A673 (cell line): ENCODE measurements at regions of chr3 and their contacts with region 1.

Region 1: GRCh38 chr3:153927107-153927506 is 194.1 kb upstream of the ARHGEF26 start:
- DNase-seq: peak; percentile 86
- H3K4me3 ChIP-seq: no peak overlapping the region
- H3K27ac ChIP-seq: no peak overlapping the region
- H3K4me1 ChIP-seq: no peaks in the 10 kb centered on the region
- H3K27me3 ChIP-seq: no peaks in the 10 kb centered on the region
- CTCF ChIP-seq: peak; percentile 55

Region 2: DNA sequence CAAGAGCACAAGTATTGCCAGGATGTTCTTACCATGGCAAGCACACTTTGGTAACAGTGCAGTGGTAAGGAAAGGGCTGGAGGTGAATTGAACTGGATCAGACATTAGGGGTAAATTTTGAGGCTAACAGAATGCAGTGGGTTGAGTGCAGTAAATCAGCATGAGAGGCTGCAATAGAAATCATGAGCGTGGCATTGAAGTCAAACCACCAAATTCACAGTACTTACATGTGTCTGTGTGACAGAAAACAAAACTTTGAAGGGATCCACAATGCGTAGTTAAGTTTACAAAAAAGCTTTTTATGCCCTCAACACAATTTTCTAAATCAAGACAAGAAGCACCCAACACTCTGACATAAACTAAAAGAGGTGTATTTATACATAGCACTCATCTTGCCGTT is 233.9 kb before region 1 on chr3:
- CTCF ChIA-PET with region 1: no interaction called
- POLR2A ChIA-PET with region 1: no interaction called
- intact Hi-C with region 1: loop called (anchors 10 kb)
- DNase-seq: no peak
- H3K4me3 ChIP-seq: no peak overlapping the region
- H3K27ac ChIP-seq: no peak overlapping the region
- H3K4me1 ChIP-seq: no peaks in the 10 kb centered on the region
- H3K27me3 ChIP-seq: no peaks in the 10 kb centered on the region
- CTCF ChIP-seq: no peak

Region 3: GRCh38 chr3:153783106-153783505 is 144.0 kb before region 1 on chr3:
- CTCF ChIA-PET with region 1: no interaction called
- POLR2A ChIA-PET with region 1: no interaction called
- intact Hi-C with region 1: loop called (anchors 10 kb)
- DNase-seq: peak; percentile 96
- H3K4me3 ChIP-seq: no peak overlapping the region
- H3K27ac ChIP-seq: no peak overlapping the region
- H3K4me1 ChIP-seq: peaks cover 32% of the 10 kb centered on the region
- H3K27me3 ChIP-seq: no peaks in the 10 kb centered on the region
- CTCF ChIP-seq: no peak

Region 4: GRCh38 chr3:153976891-153977554 is 49.9 kb after region 1 on chr3:
- CTCF ChIA-PET with region 1: no interaction called
- POLR2A ChIA-PET with region 1: no interaction called
- intact Hi-C with region 1: no loop called
- DNase-seq: peak; percentile 66
- H3K4me3 ChIP-seq: no peak overlapping the region
- H3K27ac ChIP-seq: no peak overlapping the region
- H3K4me1 ChIP-seq: peaks cover 15% of the 10 kb centered on the region
- H3K27me3 ChIP-seq: peaks cover 3% of the 10 kb centered on the region
- CTCF ChIP-seq: no peak

Region 5: DNA sequence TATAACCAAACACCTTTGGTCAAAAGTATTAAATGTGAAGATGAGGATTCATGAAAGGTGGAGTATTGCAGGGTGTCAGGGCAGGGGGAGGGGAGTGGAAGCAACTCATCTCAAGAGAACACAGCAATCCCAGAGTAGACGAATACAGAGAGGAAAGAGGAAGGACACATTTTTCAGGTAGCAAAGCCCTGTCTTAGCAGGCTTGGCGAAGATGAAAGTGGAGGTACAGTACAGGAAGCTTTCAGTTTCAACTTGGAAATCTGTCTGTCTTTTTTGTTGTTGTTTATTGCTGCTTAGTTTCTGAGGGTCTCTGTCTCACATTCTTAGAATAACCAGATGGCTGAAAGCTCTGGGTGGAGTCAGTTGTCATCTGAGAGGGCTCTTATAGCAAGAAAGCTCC is 583.7 kb after region 1 on chr3:
- CTCF ChIA-PET with region 1: no interaction called
- POLR2A ChIA-PET with region 1: no interaction called
- intact Hi-C with region 1: no loop called
- DNase-seq: no peak
- H3K4me3 ChIP-seq: no peak overlapping the region
- H3K27ac ChIP-seq: no peak overlapping the region
- H3K4me1 ChIP-seq: no peaks in the 10 kb centered on the region
- H3K27me3 ChIP-seq: no peaks in the 10 kb centered on the region
- CTCF ChIP-seq: no peak